Heart right ventricle (tissue), 16 donors: ENCODE measurements at regions of chr9 and their contacts with region 1.

Region 1: DNA sequence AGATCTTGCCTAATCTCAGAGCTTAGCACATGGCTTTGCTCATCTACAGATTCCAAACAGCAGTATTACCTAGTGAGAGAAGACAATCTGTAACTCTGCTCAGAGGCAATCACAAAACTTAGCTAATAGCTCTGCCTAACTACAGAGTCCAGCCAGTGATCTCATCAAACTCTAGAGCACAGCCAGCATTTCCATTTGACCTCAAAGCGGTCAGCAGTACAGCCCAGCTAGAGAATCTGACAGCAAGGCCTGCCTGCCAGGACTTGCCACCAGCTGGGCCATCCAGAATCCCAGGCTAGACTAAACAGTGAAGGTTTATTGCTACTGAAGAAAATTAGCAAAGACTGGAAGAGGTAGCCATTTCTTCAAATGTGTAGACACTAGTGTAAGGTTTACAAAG is 217.9 kb upstream of the VLDLR start:
- DNase-seq: no peak
- ATAC-seq: no peak
- H3K4me3 ChIP-seq: no peak overlapping the region
- H3K27ac ChIP-seq: no peak overlapping the region
- H3K4me1 ChIP-seq: no peaks in the 10 kb centered on the region
- H3K27me3 ChIP-seq: no peaks in the 10 kb centered on the region
- CTCF ChIP-seq: no peak

Region 2: DNA sequence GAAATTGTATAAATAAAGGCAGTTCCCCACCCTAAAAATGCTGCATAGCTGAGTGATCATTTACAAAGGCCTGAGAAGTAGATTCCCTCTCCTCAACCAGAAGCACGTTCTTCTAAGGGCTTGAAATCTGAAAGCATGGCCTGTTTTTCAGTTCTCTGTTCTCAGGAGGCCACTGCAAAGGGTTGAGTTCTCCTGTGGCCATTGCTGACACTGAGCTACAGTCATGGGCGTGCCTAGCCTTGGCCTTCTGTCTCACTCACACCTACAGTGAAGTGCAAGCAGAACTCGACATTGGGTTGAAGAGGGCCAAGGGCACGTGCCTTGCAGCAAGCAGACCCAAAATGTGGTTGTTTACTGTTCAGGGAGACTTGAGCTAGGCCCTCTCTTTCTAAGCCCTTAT is 58.7 kb before region 1 on chr9:
- intact Hi-C with region 1: loop called in 1 of 10 experiments (anchors 2 kb)
- DNase-seq: no peak
- ATAC-seq: peak in 1 of 8 donors; percentile 37
- H3K4me3 ChIP-seq: no peak overlapping the region
- H3K27ac ChIP-seq: no peak overlapping the region
- H3K4me1 ChIP-seq: peaks cover 0 to 10% (median 0%) of the 10 kb centered on the region in 9 donors
- H3K27me3 ChIP-seq: no peaks in the 10 kb centered on the region
- CTCF ChIP-seq: no peak

Region 3: DNA sequence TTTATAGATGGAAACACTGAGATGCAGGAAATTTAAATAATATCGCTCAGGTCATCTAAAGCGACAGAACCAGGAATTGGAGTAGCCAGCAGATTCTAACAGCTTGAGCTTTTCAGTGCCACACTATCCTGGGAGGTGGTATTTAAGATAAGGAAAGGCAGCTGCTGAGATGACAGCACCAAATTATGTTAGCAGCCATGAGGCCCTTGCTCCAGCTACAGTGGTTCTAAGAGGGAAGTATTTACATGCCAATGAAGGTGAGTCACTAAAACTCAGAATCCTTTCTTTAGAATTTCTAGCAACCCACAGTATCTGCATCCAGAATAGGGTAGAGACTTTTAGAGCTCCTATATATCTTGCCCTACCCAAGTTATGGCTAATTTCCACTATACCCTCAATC is 90.9 kb after region 1 on chr9:
- intact Hi-C with region 1: no loop called
- DNase-seq: no peak
- ATAC-seq: peak in 2 of 8 donors; percentile 27 to 57
- H3K4me3 ChIP-seq: no peak overlapping the region
- H3K27ac ChIP-seq: peak overlapping the region in 7 of 10 donors; percentile 5 to 84 (median 64)
- H3K4me1 ChIP-seq: peaks cover 2 to 65% (median 29%) of the 10 kb centered on the region in 9 donors
- H3K27me3 ChIP-seq: no peaks in the 10 kb centered on the region
- CTCF ChIP-seq: no peak